Activated CD4-positive, alpha-beta T cell treated with anti-CD3 and anti-CD28 coated beads for 36 hours (primary cell): ENCODE measurements at regions of chr16 and their contacts with region 1.

Region 1: GRCh38 chr16:67480833-67481560 is at the start of gene ATP6V0D1:
- DNase-seq: peak; percentile 100
- ATAC-seq: peak; percentile 92
- H3K4me3 Mint-ChIP-seq: peak within 1 kb of the TSS; percentile 97
- H3K27ac Mint-ChIP-seq: peak within 1 kb of the TSS; percentile 98
- H3K4me1 Mint-ChIP-seq: peaks cover 31% of the 10 kb centered on the region
- H3K27me3 Mint-ChIP-seq: no peaks in the 10 kb centered on the region
- total RNA-seq, gene ATP6V0D1: 16.3 to 17.3 TPM

Region 2: DNA sequence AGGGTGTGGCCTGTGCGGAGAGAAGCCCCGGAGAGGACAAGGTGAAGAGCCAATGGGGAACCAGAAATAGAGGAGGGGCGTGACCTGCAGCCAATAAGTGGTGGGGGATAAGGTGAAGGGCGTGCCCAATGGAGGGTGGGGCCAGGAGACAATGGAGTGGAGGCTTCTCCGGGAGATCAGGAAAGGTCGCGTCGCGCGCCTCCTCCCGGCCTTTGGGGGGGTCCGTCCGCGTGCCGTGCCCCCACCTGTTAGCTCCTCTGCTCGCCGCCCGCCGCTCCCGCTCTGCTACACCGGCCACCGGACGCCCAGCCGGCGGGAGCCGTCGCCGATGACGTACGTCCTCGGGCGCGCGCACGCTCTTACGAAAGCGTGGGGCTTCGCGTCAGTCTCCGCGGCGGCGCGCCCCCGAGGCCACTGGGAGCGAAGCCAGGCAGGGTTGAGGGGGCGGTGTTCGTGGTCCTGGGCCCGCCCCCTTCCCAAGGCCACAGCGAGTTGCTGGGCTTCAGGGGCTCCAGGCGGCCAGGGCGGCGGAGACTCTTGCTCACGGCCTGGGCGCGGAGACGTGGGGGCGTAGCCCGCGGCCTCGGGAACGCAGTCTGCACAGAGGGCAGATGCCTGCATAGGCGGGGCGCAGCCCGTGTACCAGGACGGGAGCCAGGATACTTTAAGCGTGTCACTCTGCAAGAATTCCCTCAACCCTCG is 297.2 kb before region 1 on chr16 and contains the start of gene MATCAP1:
- CTCF ChIA-PET with region 1: no interaction called
- POLR2A ChIA-PET with region 1: no interaction called
- intact Hi-C with region 1: loop called in 1 of 2 experiments (anchors 2 kb)
- DNase-seq: peak; percentile 96
- ATAC-seq: peak; percentile 97
- H3K4me3 Mint-ChIP-seq: no peak within 1 kb of the TSS
- H3K27ac Mint-ChIP-seq: no peak within 1 kb of the TSS
- H3K4me1 Mint-ChIP-seq: peaks cover 15% of the 10 kb centered on the region
- H3K27me3 Mint-ChIP-seq: peaks cover 9% of the 10 kb centered on the region
- total RNA-seq, gene MATCAP1: 28.8 to 30.4 TPM

Region 3: DNA sequence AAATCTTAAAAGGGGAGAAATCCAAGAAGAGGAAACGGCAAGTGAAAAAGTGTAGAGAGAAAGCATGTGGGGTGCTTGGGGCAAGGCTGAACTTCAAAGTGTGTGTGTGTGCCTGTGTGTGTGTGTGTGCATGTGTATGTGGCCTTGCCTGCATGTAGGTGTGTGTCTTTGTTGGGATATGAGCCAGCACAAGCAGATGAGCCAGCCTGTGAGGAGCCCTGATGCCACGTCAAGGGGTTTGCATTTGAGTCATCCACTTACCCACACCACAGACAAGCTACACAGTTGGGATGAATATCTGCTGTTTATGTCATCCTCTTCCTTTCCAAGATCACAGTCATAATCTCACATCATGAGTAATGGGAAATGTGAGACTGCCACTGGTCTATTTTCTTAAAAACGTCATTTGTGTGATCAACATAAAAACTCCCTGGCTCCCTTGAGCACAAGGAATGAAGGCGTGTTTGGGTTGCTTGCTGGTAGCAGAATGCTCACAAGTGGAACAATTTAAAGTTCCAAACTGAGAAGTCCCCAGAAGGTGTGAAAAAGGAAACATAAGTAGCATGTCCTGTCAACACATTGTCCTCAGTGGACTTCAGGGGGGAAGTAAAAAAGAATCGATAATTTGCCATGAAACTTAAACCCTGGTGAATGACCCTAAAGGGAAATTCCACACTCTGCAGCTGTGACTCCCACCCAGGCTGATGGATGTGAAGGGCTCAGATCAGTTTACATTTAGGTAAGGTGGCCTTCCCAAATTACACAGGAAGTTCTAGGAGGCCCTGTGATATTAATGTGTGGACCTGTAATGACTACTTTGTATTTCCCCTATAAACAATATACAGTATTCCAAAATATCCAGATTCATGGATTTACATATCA is 169.1 kb before region 1 on chr16:
- CTCF ChIA-PET with region 1: no interaction called
- POLR2A ChIA-PET with region 1: interaction called, 3 read pairs
- intact Hi-C with region 1: loop called in 1 of 2 experiments (anchors 1 kb)
- DNase-seq: peak; percentile 94
- ATAC-seq: peak; percentile 98
- H3K4me3 Mint-ChIP-seq: peak overlapping the region; percentile 1
- H3K27ac Mint-ChIP-seq: peak overlapping the region; percentile 98
- H3K4me1 Mint-ChIP-seq: peaks cover 40% of the 10 kb centered on the region
- H3K27me3 Mint-ChIP-seq: peaks cover 1% of the 10 kb centered on the region

Region 4: GRCh38 chr16:67521095-67521804 is 40.3 kb after region 1 on chr16:
- CTCF ChIA-PET with region 1: interaction called, 390 read pairs
- POLR2A ChIA-PET with region 1: no interaction called
- intact Hi-C with region 1: loop called in 1 of 2 experiments (anchors 1 kb)
- DNase-seq: peak; percentile 99
- ATAC-seq: peak; percentile 94
- H3K4me3 Mint-ChIP-seq: peak overlapping the region; percentile 80
- H3K27ac Mint-ChIP-seq: peak overlapping the region; percentile 97
- H3K4me1 Mint-ChIP-seq: peaks cover 10% of the 10 kb centered on the region
- H3K27me3 Mint-ChIP-seq: no peaks in the 10 kb centered on the region

Region 5: DNA sequence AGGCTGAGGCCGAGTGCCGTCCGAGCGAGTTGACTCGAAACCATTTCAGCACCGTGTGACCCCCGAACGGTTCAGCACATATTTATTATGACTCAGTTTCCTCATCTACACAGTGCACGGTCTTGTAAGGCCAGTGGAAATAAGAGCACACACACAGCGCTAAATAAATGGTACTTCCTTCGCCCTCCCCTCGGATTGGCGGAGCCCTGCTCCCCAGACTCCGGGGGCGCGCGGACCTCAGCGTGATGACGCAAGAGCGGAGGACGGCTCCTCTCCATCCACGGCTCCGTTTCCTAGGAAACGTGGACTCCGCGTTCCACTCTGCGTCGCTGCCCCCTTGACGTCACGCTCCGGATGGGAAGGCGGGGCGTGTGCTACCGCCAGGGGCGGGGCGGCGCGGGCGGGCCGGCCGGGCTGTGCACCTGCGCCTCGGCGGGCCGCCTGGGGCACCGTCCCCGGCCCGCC is 179.6 kb after region 1 on chr16 and contains the start of gene PARD6A:
- CTCF ChIA-PET with region 1: interaction called, 10 read pairs
- POLR2A ChIA-PET with region 1: interaction called, 4 read pairs
- intact Hi-C with region 1: loop called (anchors 1 to 5 kb)
- DNase-seq: peak; percentile 98
- ATAC-seq: peak; percentile 83
- H3K4me3 Mint-ChIP-seq: peak within 1 kb of the TSS; percentile 90
- H3K27ac Mint-ChIP-seq: peak within 1 kb of the TSS; percentile 91
- H3K4me1 Mint-ChIP-seq: peaks cover 21% of the 10 kb centered on the region
- H3K27me3 Mint-ChIP-seq: no peaks in the 10 kb centered on the region
- total RNA-seq, gene PARD6A: 7.8 to 8.7 TPM

Region 6: DNA sequence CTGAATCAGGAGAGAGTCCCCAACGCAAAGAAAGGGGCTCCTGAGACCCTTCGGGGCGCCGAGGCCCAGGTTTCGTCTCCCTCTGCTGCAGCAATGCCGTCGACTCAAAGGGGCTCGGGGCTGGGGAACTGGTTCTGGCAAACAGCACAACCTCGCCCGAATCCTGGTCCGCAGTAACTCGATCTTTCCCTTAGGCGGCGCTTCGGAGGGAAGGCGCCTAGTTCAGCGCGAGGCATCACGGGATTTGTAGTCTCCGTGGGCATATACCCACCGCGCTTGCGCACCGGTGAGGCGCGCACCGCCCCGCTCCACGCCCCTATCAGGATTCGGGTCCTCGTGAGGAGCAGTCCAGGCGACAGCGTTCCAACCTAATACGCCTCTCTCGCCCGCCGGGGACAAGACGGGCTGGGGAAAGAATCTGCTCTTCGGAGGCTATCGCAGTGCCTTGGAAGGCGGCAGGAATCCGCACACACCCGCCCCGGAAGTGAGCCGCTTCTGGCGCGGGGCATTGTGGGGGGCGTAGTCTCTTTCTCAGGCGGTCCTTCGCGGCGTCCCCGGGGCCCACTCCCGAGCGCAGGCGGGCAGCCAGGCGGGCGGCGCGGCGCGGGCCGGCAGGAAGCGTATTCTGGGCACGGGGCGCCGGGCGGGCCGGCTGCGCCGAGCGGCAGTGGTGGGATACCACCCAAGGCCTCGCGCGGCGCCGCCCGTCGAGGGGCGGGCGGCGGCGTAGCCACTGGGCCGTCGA is 360.9 kb after region 1 on chr16 and contains the start of gene THAP11:
- CTCF ChIA-PET with region 1: no interaction called
- POLR2A ChIA-PET with region 1: no interaction called
- intact Hi-C with region 1: loop called in 1 of 2 experiments (anchors 1 kb)
- DNase-seq: peak; percentile 97
- ATAC-seq: peak; percentile 55
- H3K4me3 Mint-ChIP-seq: peak within 1 kb of the TSS; percentile 94
- H3K27ac Mint-ChIP-seq: peak within 1 kb of the TSS; percentile 97
- H3K4me1 Mint-ChIP-seq: peaks cover 33% of the 10 kb centered on the region
- H3K27me3 Mint-ChIP-seq: no peaks in the 10 kb centered on the region
- total RNA-seq, gene THAP11: 31.8 to 34.5 TPM